ENCODE measurements at regions of chr3 and their contacts with region 1.

Region 1: GRCh38 chr3:120544361-120544760 is 51.8 kb upstream of the NDUFB4 start:
- DNase-seq: no peak
- H3K4me3 ChIP-seq: no peak overlapping the region
- H3K27ac ChIP-seq: no peak overlapping the region
- H3K4me1 ChIP-seq: no peaks in the 10 kb centered on the region
- H3K27me3 ChIP-seq: no peaks in the 10 kb centered on the region
- CTCF ChIP-seq: no peak

Region 2: DNA sequence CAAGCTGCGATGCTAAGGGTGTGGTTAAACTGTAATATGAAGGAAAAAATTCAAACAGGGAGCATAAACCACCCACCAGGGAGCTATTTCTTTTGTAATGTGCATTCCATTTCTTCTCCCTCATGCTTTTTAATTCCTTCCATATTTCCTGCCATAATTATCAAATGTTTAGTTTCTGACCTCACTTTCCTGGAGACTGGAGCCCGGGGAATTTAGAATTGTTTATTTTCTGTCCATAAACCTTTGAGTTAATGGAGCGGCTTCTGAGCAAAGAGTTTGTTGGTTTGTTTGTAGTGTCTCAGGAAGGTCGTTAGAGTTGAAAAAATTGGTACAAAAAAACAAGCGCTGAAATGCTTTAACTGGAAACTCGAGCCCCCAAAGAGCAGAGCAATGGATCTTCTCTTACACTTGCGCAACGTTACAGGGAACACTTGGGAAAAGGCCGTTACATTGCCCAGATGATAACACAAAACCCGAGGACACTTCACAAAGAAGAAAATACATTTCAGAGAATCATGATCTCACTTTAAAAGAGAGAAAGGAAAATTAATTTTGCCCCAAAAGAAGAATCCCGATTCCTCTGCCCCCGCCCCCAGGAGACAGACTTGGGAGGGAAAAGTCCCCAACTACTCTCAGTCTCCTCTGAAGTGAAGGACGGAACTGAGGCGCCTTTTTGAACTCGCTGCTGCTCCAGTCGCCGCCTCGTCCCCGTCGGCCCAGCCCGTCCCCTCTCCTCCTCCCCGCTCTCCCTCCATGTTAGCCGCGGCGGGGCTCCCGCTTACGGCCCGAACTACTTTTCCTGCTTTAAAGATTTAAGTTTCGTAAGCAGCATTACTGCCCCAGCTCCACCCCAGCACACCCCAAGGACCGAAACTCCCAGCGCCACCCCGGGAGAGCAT is 94.4 kb before region 1 on chr3:
- intact Hi-C with region 1: loop called (anchors 10 kb)
- DNase-seq: peak in 4 of 5 donors; percentile 61 to 82 (median 78)
- H3K4me3 ChIP-seq: peak overlapping the region; percentile 65 to 78 (median 78)
- H3K27ac ChIP-seq: peak overlapping the region; percentile 78 to 87
- H3K4me1 ChIP-seq: peaks cover 0 to 13% (median 5%) of the 10 kb centered on the region in 3 donors
- H3K27me3 ChIP-seq: no peaks in the 10 kb centered on the region
- CTCF ChIP-seq: no peak

Measured in kidney (tissue), 22 donors.